ENCODE measurements at regions of chr19 and their contacts with region 1.

Region 1: GRCh38 chr19:42423462-42424344 is 3.5 kb downstream of the LIPE start:
- DNase-seq: peak; percentile 93 to 95 (median 94)
- H3K4me3 ChIP-seq: peak overlapping the region; percentile 86 to 97
- H3K4me3 Mint-ChIP-seq: peak overlapping the region; percentile 91 to 99 (median 98)
- H3K27ac ChIP-seq: peak overlapping the region; percentile 61
- H3K27ac Mint-ChIP-seq: peak overlapping the region; percentile 88 to 98 (median 95)
- H3K4me1 ChIP-seq: peaks cover 39% of the 10 kb centered on the region
- H3K4me1 Mint-ChIP-seq: peaks cover 28 to 48% (median 37%) of the 10 kb centered on the region in 4 donors
- H3K27me3 ChIP-seq: no peaks in the 10 kb centered on the region
- H3K27me3 Mint-ChIP-seq: no peaks in the 10 kb centered on the region

Region 2: DNA sequence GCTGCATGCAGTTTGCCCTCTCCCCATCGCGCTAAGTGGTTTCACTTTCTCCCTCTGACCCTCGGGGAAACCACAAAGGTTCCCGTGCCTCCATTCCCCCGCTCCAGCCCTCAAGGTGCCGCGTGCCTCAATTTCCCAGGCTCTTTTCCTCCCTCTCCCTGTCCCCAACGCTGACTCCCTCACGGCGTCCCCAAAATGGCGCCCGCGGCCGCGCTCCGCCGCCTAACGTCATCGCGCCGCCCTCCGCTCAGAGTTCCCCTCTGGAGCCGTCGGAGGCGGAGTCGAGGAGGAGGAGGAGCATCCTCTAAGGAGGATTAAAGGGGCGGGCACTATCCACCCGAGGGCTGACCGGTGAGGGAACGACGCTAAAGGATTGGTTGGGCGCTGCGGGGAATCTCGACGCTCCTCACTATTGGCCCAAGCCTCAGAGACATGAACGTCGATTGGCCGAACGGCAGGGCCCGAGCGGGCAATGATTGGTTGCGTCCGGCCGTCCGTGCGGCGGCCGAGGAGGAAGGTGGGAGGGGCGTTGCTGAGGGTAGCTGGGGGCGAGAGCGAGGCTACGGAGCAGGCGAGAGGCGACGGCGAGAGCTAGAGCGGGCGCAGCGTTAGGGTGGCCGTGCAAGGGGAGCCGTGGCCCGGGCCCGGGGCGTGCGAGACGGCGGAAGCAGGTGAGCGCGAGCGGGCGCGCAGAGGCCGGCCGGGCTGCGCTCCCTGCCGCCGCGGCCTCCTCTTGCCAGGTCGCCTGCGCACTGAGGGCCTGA is 347.9 kb before region 1 on chr19 and contains the start of gene ZNF574:
- CTCF ChIA-PET with region 1: no interaction called
- POLR2A ChIA-PET with region 1: no interaction called
- intact Hi-C with region 1: loop called (anchors 5 kb)
- DNase-seq: peak; percentile 96 to 99 (median 99)
- H3K4me3 ChIP-seq: peak within 1 kb of the TSS; percentile 66 to 86
- H3K4me3 Mint-ChIP-seq: peak within 1 kb of the TSS; percentile 92 to 100 (median 98)
- H3K27ac ChIP-seq: peak within 1 kb of the TSS; percentile 95
- H3K27ac Mint-ChIP-seq: peak within 1 kb of the TSS; percentile 97 to 100 (median 100)
- H3K4me1 ChIP-seq: peaks cover 24% of the 10 kb centered on the region
- H3K4me1 Mint-ChIP-seq: peaks cover 29 to 38% (median 34%) of the 10 kb centered on the region in 4 donors
- H3K27me3 ChIP-seq: no peaks in the 10 kb centered on the region
- H3K27me3 Mint-ChIP-seq: no peaks in the 10 kb centered on the region
- total RNA-seq, gene ZNF574: 25.1 to 26.0 TPM

Region 3: DNA sequence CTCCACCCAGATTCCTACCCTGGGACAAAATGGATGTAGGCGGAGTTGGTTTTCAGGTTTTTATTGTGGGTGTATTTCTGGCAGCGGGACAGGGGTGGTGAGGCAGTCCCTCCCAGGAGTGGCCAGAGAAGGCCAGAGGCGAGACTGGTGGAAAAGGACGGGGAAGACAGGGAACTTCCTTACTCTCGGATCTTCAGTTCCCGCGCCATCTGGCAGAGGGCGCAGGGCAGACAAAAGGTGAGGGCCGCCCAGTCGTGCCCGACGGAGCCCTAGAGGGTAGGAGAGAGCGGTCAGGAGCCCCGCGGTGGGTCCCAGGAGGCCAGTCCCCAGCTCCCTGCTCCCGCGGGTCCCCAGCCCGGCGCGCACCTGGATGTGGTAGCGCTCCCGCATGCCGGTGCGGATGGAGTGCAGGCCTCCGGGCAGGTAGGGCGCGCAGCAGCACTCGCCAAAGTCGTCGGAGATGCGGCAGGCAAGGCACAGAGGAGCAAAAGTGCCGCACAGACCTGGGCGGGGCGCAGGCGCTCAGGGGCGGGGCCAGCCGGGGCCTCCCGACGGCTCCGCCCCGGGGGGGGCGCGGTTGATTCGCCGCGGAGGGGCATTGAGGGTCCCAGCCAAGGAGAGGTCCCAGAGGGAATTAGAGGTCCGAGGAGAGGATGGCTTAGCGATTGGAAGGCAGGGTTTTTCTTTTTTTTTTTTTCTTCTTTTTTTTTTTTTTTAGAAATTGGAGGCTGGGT is 36.6 kb before region 1 on chr19:
- CTCF ChIA-PET with region 1: interaction called, 3 read pairs
- POLR2A ChIA-PET with region 1: interaction called, 5 read pairs
- intact Hi-C with region 1: loop called (anchors 5 kb)
- DNase-seq: peak; percentile 62 to 72 (median 66)
- H3K4me3 ChIP-seq: peak overlapping the region in 1 of 2 donors; percentile 45
- H3K4me3 Mint-ChIP-seq: peak overlapping the region; percentile 42 to 80 (median 68)
- H3K27ac ChIP-seq: no peak overlapping the region
- H3K27ac Mint-ChIP-seq: peak overlapping the region in 4 of 7 donors; percentile 35 to 73 (median 55)
- H3K4me1 ChIP-seq: peaks cover 10% of the 10 kb centered on the region
- H3K4me1 Mint-ChIP-seq: peaks cover 4 to 7% (median 6%) of the 10 kb centered on the region in 4 donors
- H3K27me3 ChIP-seq: no peaks in the 10 kb centered on the region
- H3K27me3 Mint-ChIP-seq: peaks cover 24 to 26% of the 10 kb centered on the region in 2 donors

Region 4: DNA sequence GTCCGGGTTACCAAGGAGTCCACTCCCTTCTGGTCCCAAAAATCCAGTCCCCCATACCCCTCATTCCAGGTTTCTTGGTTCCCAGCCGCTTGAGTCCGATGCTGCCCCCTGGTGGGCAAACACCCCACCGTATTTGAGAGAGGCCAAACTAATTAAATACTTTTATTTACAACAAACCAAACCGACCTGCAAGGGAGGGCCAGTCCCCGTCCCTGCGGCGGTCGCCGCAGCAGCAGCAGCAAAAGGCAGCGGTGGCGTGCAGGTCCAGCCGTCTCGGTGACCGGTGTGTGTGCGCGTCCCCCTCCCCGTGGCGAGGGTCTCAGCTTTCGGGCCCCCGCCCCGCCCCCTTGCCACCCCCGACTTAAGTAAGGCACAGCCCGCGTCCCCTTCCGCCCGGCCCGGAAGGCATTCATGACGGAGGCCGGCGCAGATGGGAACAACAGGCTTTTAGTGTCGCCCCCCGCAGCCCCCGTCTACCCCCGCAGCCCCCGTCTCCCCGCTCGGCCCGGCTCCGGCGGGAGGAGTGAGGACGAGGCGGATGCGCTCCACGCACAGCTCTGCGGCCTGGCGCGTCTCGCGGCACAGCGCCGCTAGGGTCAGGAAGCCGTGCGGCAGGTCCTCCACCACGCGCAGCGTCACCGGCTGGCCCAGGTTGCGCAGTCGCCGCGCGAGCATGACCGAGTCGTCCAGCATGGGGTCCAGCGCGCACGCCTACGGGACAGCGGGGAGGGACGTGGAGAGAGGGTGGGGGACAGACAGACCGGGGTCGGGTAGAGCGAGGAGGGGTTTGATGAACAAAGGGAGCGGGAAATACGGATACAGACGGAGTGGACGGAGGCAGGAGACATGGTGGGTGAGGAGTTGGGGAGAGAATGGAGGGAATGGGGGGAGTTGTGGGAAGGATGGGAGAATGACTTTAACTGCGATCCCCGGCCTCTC is 22.1 kb before region 1 on chr19:
- CTCF ChIA-PET with region 1: interaction called, 13 read pairs
- POLR2A ChIA-PET with region 1: interaction called, 13 read pairs
- intact Hi-C with region 1: loop called (anchors 1 kb)
- DNase-seq: peak; percentile 63 to 79 (median 68)
- H3K4me3 ChIP-seq: peak overlapping the region; percentile 23 to 52
- H3K4me3 Mint-ChIP-seq: peak overlapping the region; percentile 82 to 91 (median 84)
- H3K27ac ChIP-seq: peak overlapping the region; percentile 29
- H3K27ac Mint-ChIP-seq: peak overlapping the region; percentile 64 to 88 (median 78)
- H3K4me1 ChIP-seq: peaks cover 30% of the 10 kb centered on the region
- H3K4me1 Mint-ChIP-seq: peaks cover 26 to 53% (median 39%) of the 10 kb centered on the region in 4 donors
- H3K27me3 ChIP-seq: no peaks in the 10 kb centered on the region
- H3K27me3 Mint-ChIP-seq: no peaks in the 10 kb centered on the region

Region 5: DNA sequence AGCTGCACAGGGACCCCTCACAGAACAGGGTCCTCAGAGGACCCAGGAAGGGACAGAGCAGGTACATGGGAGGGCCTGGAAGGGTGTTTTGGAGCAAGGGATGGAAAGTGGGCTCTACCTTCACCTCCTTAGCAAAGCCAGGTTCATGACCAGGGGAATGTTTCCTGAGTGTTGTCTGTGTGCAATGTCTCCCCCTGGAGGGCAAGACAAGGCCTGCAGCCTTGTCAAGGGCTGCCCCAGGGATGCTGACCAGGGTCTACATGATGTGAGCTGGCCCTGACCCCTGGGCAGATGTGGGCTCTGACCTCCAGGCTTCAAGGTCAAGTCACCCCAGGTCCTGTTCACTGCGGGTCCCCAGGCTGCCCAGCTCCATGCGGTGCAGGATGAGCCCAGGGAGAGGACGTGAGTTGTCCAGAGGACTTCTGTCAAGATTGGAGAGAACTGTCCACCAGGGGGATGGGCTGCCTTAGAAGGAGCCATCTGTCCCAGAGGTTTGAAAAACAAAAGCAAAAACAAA is 105.6 kb after region 1 on chr19:
- CTCF ChIA-PET with region 1: interaction called, 13 read pairs
- POLR2A ChIA-PET with region 1: interaction called, 8 read pairs
- intact Hi-C with region 1: no loop called
- DNase-seq: peak; percentile 64 to 72 (median 68)
- H3K4me3 ChIP-seq: peak overlapping the region; percentile 48 to 63
- H3K4me3 Mint-ChIP-seq: peak overlapping the region; percentile 81 to 94 (median 88)
- H3K27ac ChIP-seq: peak overlapping the region; percentile 47
- H3K27ac Mint-ChIP-seq: peak overlapping the region; percentile 75 to 96 (median 88)
- H3K4me1 ChIP-seq: peaks cover 35% of the 10 kb centered on the region
- H3K4me1 Mint-ChIP-seq: peaks cover 23 to 40% (median 33%) of the 10 kb centered on the region in 4 donors
- H3K27me3 ChIP-seq: no peaks in the 10 kb centered on the region
- H3K27me3 Mint-ChIP-seq: no peaks in the 10 kb centered on the region